ENCODE measurements at regions of chr6 and their contacts with region 1.

Region 1: DNA sequence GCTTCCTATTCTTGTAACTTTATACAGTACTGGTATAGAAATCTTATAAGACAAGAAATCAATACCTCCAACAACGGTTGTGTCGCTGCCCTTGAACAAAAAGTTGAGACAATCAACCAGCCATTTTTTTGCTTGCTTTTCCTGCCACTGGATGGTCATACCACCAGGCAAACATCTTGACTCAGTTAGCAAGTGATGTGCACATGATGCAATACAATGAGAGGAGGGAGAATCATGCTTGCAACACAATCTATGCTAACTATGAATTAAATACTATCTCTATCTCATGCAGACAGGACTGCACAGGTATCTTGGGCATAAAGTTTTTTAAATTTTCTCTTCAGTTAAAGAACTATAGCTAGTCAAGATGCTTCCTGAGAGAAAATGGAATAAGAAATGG is 877.7 kb upstream of the CITED2 start:
- DNase-seq: no peak
- ATAC-seq: no peak
- H3K4me3 ChIP-seq: no peak overlapping the region
- H3K27ac ChIP-seq: no peak overlapping the region
- H3K4me1 ChIP-seq: peaks cover 5% of the 10 kb centered on the region
- H3K27me3 ChIP-seq: no peaks in the 10 kb centered on the region
- CTCF ChIP-seq: no peak

Region 2: DNA sequence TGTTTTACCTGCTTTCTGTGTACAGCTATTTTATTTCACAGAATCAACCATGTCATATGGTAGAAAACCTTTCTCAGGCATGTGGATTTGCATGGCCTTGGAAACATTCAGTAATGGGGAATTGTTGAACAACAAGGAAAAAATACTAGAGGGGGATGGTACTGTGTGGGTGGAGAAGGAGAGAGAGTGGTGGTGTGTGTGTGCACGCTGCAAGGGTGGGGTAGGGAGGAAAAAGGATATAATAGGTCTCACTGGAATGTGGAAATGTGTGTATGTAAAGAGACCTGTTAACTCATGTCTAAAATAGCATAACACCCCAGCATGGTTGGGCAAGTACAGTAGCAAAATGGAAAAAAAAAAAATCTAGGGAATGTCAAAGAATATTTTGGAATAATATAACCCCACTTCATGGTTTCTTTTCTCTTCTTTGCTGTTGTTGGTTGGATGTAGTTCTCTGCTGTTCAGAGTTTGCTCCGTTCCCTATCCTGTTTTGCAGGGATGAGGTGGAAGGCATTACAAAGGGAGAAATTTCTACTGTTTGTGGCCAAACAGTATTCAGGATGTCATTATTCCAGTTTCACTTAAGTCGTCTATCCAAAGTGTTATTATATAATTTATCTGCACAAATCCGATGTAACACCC is 783.8 kb before region 1 on chr6:
- CTCF ChIA-PET with region 1: no interaction called
- POLR2A ChIA-PET with region 1: interaction called, 14 read pairs
- intact Hi-C with region 1: no loop called
- DNase-seq: no peak
- ATAC-seq: no peak
- H3K4me3 ChIP-seq: no peak overlapping the region
- H3K27ac ChIP-seq: no peak overlapping the region
- H3K4me1 ChIP-seq: no peaks in the 10 kb centered on the region
- H3K27me3 ChIP-seq: no peaks in the 10 kb centered on the region
- CTCF ChIP-seq: no peak

Region 3: GRCh38 chr6:139895205-139895793 is 356.8 kb before region 1 on chr6:
- CTCF ChIA-PET with region 1: no interaction called
- POLR2A ChIA-PET with region 1: interaction called, 10 read pairs
- intact Hi-C with region 1: no loop called
- DNase-seq: peak; percentile 15
- ATAC-seq: no peak
- H3K4me3 ChIP-seq: no peak overlapping the region
- H3K27ac ChIP-seq: no peak overlapping the region
- H3K4me1 ChIP-seq: no peaks in the 10 kb centered on the region
- H3K27me3 ChIP-seq: no peaks in the 10 kb centered on the region
- CTCF ChIP-seq: peak; percentile 43